OCI-LY7 (cell line): ENCODE measurements at regions of chr1 and their contacts with region 1.

Region 1: DNA sequence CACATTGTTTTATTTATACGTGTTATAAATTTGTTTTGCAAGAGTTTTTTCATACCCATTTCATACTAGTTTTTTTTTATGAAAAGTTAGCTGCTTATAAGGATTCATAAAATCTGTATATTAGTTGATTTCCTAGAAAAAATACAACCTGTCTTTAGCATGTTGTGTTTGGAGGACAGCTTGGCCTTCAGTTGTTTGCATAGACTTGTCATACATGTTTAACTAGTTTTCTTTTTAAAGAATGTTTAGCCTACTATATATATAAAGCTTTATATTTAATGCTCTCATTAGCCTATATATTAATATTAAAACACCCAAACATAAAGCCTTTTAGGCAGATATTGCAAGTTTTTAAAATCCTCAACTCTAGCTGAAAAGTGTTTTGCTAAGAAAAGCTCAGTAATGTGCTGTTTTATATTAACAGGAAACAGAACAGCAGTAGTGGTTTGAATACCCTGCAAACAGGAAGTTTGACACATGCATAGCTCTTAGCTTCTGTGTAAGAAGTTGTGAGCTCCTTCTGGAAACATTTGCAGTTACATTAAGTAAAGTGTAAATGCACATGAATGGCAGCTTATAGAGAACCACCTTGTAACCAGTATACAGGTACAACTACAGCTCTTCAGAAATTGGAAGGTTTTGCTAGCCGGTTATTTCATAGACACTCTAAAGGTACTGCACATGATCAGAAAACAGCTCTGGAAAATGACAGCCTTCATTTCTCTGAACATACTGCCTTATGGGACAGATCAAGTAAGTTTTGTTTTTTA is at the start of gene PRKACB:
- DNase-seq: peak; percentile 86
- H3K4me3 ChIP-seq: peak within 1 kb of the TSS; percentile 78
- H3K27ac ChIP-seq: peak within 1 kb of the TSS; percentile 89
- H3K4me1 ChIP-seq: peaks cover 38% of the 10 kb centered on the region
- CTCF ChIP-seq: no peak
- total RNA-seq, gene PRKACB: 14.1 and 16.6 TPM in 2 replicates

Region 2: DNA sequence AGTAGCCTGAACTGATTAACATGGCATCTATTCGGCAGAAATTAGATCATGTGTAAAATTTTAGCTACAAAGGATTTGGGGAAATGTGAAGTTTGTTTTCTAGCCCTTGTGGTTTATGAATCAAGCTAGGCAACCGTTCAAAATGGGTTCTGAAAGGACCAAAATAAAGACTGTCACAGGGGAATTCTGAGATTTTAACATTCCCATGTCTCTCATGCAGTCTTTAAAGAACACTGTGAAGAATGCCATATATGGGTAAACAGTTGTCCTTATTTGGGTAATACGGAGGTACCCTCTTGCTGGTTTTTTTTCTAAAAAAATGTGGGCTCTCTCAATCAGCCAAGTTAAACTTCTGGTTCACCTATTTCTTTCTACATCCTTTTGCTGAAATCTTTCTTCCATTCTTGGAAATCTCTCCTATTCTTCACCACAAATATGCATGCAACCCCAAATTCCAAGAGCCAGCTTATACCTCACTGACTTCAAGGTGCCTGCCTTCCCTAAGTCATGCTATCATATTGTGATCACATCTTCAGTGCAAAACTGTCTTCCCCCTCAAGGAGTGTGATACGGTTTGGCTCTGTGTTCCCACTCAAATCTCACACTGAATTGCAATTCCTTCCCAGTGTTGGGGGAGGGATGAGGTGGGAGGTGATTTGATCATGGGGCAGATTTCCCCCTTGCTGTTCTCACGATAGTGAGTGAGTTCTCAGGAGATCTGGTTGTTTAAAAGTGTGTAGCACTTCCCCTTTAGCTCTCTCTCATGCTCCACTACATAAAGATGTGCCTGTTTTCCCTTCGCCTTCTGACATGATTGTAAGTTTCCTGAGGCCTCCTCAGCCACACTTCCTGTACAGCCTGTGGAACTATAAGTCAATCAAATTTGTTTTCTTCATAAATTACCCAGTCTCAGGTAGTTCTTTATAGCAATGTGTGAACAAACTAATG is 453.8 kb before region 1 on chr1:
- CTCF ChIA-PET with region 1: no interaction called
- POLR2A ChIA-PET with region 1: no interaction called
- intact Hi-C with region 1: no loop called
- DNase-seq: peak; percentile 15
- H3K4me3 ChIP-seq: no peak overlapping the region
- H3K27ac ChIP-seq: no peak overlapping the region
- H3K4me1 ChIP-seq: peaks cover 35% of the 10 kb centered on the region
- CTCF ChIP-seq: no peak

Region 3: GRCh38 chr1:84077476-84078107 is 66.4 kb before region 1 on chr1:
- CTCF ChIA-PET with region 1: no interaction called
- POLR2A ChIA-PET with region 1: interaction called, 5 read pairs
- intact Hi-C with region 1: loop called (anchors 5 kb)
- DNase-seq: peak; percentile 89
- H3K4me3 ChIP-seq: peak overlapping the region; percentile 80
- H3K27ac ChIP-seq: peak overlapping the region; percentile 32
- H3K4me1 ChIP-seq: peaks cover 15% of the 10 kb centered on the region
- CTCF ChIP-seq: no peak

Region 4: DNA sequence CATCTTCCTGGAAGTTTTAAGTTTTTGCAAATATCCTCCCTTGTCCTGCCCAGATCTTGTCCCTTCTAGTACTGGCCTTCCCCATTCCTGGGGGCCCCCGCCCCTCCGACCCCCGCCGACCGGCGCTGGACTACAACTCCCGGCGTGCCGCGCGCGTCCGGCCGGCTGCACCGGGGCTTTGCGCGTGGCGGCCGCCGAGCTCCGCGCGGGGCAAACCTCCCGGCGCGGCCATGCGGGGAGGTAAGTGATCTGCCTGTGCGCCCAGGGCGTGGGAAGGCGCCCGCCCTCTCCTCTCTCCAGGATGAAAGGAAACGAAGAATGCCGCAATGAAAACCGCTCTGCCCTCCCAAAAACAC is 154.3 kb after region 1 on chr1:
- CTCF ChIA-PET with region 1: interaction called, 5 read pairs
- POLR2A ChIA-PET with region 1: interaction called, 139 read pairs
- intact Hi-C with region 1: loop called (anchors 1 kb)
- DNase-seq: peak; percentile 73
- H3K4me3 ChIP-seq: peak overlapping the region; percentile 94
- H3K27ac ChIP-seq: peak overlapping the region; percentile 57
- H3K4me1 ChIP-seq: peaks cover 50% of the 10 kb centered on the region
- CTCF ChIP-seq: no peak

Region 5: GRCh38 chr1:84506002-84506728 is 362.2 kb after region 1 on chr1 and contains the starts of genes GNG5 and SPATA1:
- CTCF ChIA-PET with region 1: no interaction called
- POLR2A ChIA-PET with region 1: interaction called, 41 read pairs
- intact Hi-C with region 1: loop called (anchors 2 kb)
- DNase-seq: peak; percentile 96
- H3K4me3 ChIP-seq: peak within 1 kb of the TSS; percentile 91
- H3K27ac ChIP-seq: peak within 1 kb of the TSS; percentile 87
- H3K4me1 ChIP-seq: peaks cover 33% of the 10 kb centered on the region
- CTCF ChIP-seq: no peak
- total RNA-seq, gene GNG5: 25.7 and 45.1 TPM in 2 replicates
- total RNA-seq, gene SPATA1: 4.7 and 4.8 TPM in 2 replicates

Region 6: DNA sequence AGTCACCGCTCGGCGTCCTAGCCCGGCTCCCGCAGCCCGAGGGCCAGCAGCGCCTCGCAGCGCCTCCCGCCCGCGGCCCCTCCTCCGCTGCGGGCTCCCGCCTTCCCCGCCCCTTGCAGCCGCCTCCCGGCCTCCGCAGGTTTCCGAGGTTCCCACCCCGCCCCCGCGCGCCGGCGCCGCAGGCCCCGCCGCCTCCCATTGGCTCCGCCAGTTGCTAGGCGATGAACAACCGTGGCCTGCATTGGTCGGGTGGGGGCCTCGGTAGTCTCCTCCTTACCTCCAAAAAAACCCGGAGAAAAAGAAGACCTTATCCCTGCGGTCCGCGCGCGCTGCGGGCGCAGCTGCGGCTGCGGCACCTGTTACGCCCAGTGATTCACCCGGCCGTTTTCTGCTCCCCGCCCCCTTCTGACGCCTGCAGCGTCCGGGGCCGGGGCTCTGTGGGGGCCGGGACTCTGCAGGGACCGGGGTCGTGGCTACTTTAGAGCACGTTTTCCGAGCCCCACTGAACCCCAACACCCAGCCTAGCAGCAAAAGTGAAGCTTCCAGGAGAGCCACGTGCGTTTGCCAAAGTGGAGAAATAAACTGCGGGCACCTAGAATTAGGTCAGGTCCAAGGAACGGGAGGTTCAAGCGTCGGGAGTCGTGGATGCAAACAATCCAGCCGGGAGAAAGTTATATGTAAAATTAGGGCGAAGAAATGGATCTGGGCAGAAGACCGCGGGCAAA is 546.6 kb after region 1 on chr1 and contains the start of gene SSX2IP:
- CTCF ChIA-PET with region 1: no interaction called
- POLR2A ChIA-PET with region 1: interaction called, 4 read pairs
- intact Hi-C with region 1: loop called (anchors 1 kb)
- DNase-seq: peak; percentile 97
- H3K4me3 ChIP-seq: peak within 1 kb of the TSS; percentile 84
- H3K27ac ChIP-seq: peak within 1 kb of the TSS; percentile 77
- H3K4me1 ChIP-seq: peaks cover 48% of the 10 kb centered on the region
- CTCF ChIP-seq: no peak
- total RNA-seq, gene SSX2IP: 24.1 and 29.9 TPM in 2 replicates